ENCODE measurements at regions of chr15 and their contacts with region 1.

Region 1: DNA sequence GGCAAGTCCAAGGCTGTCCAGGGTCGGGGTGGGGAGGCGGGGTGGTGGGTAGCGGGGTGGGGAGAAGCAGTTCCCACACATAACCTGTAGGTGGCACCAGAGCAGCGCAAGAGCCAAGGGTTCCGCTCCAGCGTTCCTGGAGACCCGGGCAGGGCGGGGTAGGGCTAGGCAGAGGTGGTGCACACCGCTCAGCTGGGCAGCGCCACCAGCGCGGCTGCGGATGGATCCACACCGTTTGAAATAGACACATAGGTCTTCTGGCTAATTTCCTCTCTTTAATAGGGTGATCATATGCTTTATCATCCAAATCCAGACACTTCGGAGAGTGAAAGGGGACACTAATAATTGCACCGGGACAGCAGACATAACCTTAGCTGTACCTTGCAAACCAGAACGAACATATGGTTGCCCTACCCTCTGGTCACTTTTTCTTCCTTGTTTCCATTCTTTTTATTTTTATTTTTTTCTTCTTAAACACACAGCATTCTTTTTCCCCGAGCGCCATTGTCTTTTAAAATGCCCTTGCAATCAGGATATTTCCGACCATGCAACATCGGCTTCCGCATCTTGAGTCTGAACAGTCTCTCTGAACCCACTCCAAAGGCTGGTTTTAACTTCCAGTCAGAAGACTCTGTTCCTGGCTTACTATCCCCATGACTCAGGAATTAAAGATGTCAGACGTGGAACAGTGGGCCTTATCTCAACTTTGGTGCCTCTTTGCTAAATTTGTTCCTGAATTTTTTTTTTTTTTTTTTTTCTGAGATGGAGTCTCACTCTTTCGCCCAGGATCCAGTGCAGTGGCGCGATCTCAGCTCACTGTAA is 12.5 kb upstream of the ZSCAN2 start:
- DNase-seq: no peak
- ATAC-seq: peak; percentile 100
- H3K4me3 ChIP-seq: no peak overlapping the region; the same call in 1 of the 2 replicates
- H3K27ac ChIP-seq: no peak overlapping the region
- H3K4me1 ChIP-seq: no peaks in the 10 kb centered on the region
- H3K27me3 ChIP-seq: no peaks in the 10 kb centered on the region; a peak in 2 of 4 replicates
- CTCF ChIP-seq: peak; percentile 43 to 88 (median 72)
- EP300 ChIP-seq: no peak
- POLR2A ChIP-seq: no peak
- RAD21 ChIP-seq: peak; percentile 80

Region 2: DNA sequence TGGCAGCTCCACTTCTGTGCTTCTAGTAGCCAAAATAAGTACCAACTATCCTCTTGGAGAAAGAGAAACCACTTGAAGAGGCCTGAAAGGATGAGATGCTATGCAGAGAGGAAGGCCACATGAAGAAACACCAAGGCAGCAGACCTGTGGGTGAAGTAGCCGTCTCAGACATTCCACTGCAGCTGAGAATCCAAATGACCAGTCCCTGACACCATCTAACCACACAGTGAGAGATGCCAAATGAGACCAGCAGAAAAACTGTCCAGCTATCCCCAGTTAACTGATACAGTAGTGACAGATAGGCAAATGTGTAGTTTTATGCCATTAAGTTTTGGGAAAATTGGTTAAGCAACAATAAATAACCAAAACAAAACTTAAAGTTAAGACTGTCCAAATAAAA is 35.4 kb before region 1 on chr15:
- CTCF ChIA-PET with region 1: no interaction called
- POLR2A ChIA-PET with region 1: no interaction called
- RAD21 ChIA-PET with region 1: no interaction called
- SMC1A ChIA-PET with region 1: no interaction called
- in situ Hi-C with region 1: no loop called
- intact Hi-C with region 1: no loop called
- DNase-seq: no peak
- ATAC-seq: no peak
- H3K4me3 ChIP-seq: no peak overlapping the region
- H3K27ac ChIP-seq: no peak overlapping the region
- H3K4me1 ChIP-seq: no peaks in the 10 kb centered on the region
- H3K27me3 ChIP-seq: no peaks in the 10 kb centered on the region
- CTCF ChIP-seq: no peak
- EP300 ChIP-seq: no peak
- POLR2A ChIP-seq: no peak
- RAD21 ChIP-seq: no peak

Region 3: GRCh38 chr15:84570164-84570735 is 18.0 kb before region 1 on chr15:
- CTCF ChIA-PET with region 1: interaction called, 16 read pairs
- POLR2A ChIA-PET with region 1: no interaction called
- RAD21 ChIA-PET with region 1: no interaction called
- SMC1A ChIA-PET with region 1: interaction called, 7 read pairs
- in situ Hi-C with region 1: no loop called
- intact Hi-C with region 1: no loop called
- DNase-seq: no peak
- ATAC-seq: peak; percentile 78
- H3K4me3 ChIP-seq: peak overlapping the region; percentile 71
- H3K27ac ChIP-seq: no peak overlapping the region
- H3K4me1 ChIP-seq: no peaks in the 10 kb centered on the region; the same call in 1 of the 2 replicates
- H3K27me3 ChIP-seq: no peaks in the 10 kb centered on the region; a peak in 1 of 4 replicates
- CTCF ChIP-seq: no peak
- EP300 ChIP-seq: no peak
- POLR2A ChIP-seq: 0 out of 2 replicates have a peak, but pooled peaks have one; percentile 10
- RAD21 ChIP-seq: no peak

Region 4: GRCh38 chr15:84633311-84634227 is 45.3 kb after region 1 on chr15:
- CTCF ChIA-PET with region 1: interaction called, 12 read pairs
- POLR2A ChIA-PET with region 1: no interaction called
- RAD21 ChIA-PET with region 1: no interaction called
- SMC1A ChIA-PET with region 1: interaction called, 4 read pairs
- in situ Hi-C with region 1: no loop called
- intact Hi-C with region 1: no loop called
- DNase-seq: no peak
- ATAC-seq: peak; percentile 67
- H3K4me3 ChIP-seq: peak overlapping the region; percentile 65
- H3K27ac ChIP-seq: peak overlapping the region; percentile 5; the same call in 1 of the 2 replicates
- H3K4me1 ChIP-seq: peaks cover 9% of the 10 kb centered on the region
- H3K27me3 ChIP-seq: no peaks in the 10 kb centered on the region
- CTCF ChIP-seq: no peak
- EP300 ChIP-seq: no peak
- POLR2A ChIP-seq: peak; percentile 54
- RAD21 ChIP-seq: no peak

Region 5: GRCh38 chr15:84671211-84671610 is 82.9 kb after region 1 on chr15:
- CTCF ChIA-PET with region 1: no interaction called
- POLR2A ChIA-PET with region 1: no interaction called
- RAD21 ChIA-PET with region 1: no interaction called
- SMC1A ChIA-PET with region 1: no interaction called
- in situ Hi-C with region 1: no loop called
- intact Hi-C with region 1: no loop called
- DNase-seq: no peak
- ATAC-seq: no peak
- H3K4me3 ChIP-seq: no peak overlapping the region
- H3K27ac ChIP-seq: no peak overlapping the region
- H3K4me1 ChIP-seq: no peaks in the 10 kb centered on the region
- H3K27me3 ChIP-seq: no peaks in the 10 kb centered on the region
- CTCF ChIP-seq: no peak
- EP300 ChIP-seq: no peak
- POLR2A ChIP-seq: no peak
- RAD21 ChIP-seq: no peak

Region 6: DNA sequence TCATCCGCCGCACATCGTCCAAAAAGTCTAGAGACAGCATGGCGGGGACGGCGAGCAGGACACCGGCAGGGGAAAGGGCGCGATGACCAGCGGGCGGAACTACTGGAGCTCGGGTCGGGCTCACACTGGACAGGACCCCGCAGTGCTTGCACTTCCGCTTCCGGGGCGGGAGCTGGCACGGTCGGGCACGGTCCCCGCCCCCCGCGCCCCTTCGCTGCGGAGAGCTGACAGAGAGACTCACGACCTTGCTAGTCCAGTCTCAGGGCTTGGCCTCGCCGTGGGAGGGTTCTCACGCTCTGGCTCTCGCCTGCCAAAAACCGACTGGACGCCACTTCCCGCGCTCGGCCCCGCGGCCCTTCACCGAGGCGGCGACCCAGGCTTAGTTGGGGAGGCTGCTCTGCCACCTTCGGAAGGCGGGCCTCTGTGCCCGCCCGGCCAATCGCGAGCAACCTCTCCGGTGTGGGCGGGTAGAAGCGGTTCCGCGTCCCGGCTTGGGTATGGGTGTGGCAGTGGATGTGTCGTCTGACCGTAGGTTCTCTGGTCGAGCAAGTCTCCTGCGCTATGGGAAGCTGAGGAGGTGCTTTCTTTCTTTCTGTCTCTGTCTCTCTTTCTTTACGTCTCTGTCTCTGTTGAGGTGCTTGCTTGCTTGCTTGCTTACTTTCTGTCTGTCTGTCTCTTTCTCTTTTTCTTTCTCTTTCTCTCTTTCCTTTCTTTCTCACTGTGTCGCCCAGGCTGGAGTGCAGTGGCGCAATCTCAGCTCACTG is 128.0 kb after region 1 on chr15 and contains the start of gene SEC11A:
- CTCF ChIA-PET with region 1: no interaction called
- POLR2A ChIA-PET with region 1: no interaction called
- RAD21 ChIA-PET with region 1: no interaction called
- SMC1A ChIA-PET with region 1: no interaction called
- in situ Hi-C with region 1: no loop called
- intact Hi-C with region 1: no loop called
- DNase-seq: peak; percentile 85
- ATAC-seq: peak; percentile 97
- H3K4me3 ChIP-seq: peak within 1 kb of the TSS; percentile 70
- H3K27ac ChIP-seq: peak within 1 kb of the TSS; percentile 87
- H3K4me1 ChIP-seq: peaks cover 20% of the 10 kb centered on the region
- H3K27me3 ChIP-seq: no peaks in the 10 kb centered on the region
- CTCF ChIP-seq: no peak
- EP300 ChIP-seq: no peak
- POLR2A ChIP-seq: peak; percentile 92
- RAD21 ChIP-seq: no peak
- polyA plus RNA-seq, gene SEC11A: 132 to 152 TPM

Region 7: GRCh38 chr15:84819291-84819768 is 231.1 kb after region 1 on chr15:
- CTCF ChIA-PET with region 1: interaction called, 19 read pairs
- POLR2A ChIA-PET with region 1: no interaction called
- RAD21 ChIA-PET with region 1: interaction called, 10 read pairs
- SMC1A ChIA-PET with region 1: interaction called, 6 read pairs
- in situ Hi-C with region 1: no loop called
- intact Hi-C with region 1: no loop called
- DNase-seq: no peak
- ATAC-seq: 0 out of 3 replicates have a peak, but pooled peaks have one; percentile 12
- H3K4me3 ChIP-seq: no peak overlapping the region
- H3K27ac ChIP-seq: no peak overlapping the region
- H3K4me1 ChIP-seq: no peaks in the 10 kb centered on the region
- H3K27me3 ChIP-seq: no peaks in the 10 kb centered on the region; a peak in 1 of 4 replicates
- CTCF ChIP-seq: no peak
- EP300 ChIP-seq: no peak
- POLR2A ChIP-seq: no peak
- RAD21 ChIP-seq: no peak

Region 8: GRCh38 chr15:84874981-84875699 is 286.9 kb after region 1 on chr15:
- CTCF ChIA-PET with region 1: interaction called, 42 read pairs
- POLR2A ChIA-PET with region 1: no interaction called
- RAD21 ChIA-PET with region 1: interaction called, 9 read pairs
- SMC1A ChIA-PET with region 1: interaction called, 6 read pairs
- in situ Hi-C with region 1: loop called (anchors 5 kb)
- intact Hi-C with region 1: loop called (anchors 2 kb)
- DNase-seq: no peak
- ATAC-seq: no peak
- H3K4me3 ChIP-seq: no peak overlapping the region
- H3K27ac ChIP-seq: no peak overlapping the region
- H3K4me1 ChIP-seq: no peaks in the 10 kb centered on the region
- H3K27me3 ChIP-seq: no peaks in the 10 kb centered on the region; a peak in 1 of 4 replicates
- CTCF ChIP-seq: no peak
- EP300 ChIP-seq: no peak
- POLR2A ChIP-seq: no peak
- RAD21 ChIP-seq: no peak